ENCODE measurements at regions of chr13 and their contacts with region 1.

Region 1: GRCh38 chr13:75482070-75482819 is at the start of gene TBC1D4:
- DNase-seq: no peak
- H3K4me3 ChIP-seq: peak within 1 kb of the TSS; percentile 56 to 77
- H3K27ac ChIP-seq: peak within 1 kb of the TSS; percentile 72
- H3K4me1 ChIP-seq: peaks cover 23% of the 10 kb centered on the region
- H3K27me3 ChIP-seq: no peaks in the 10 kb centered on the region
- CTCF ChIP-seq: peak; percentile 16 to 77 (median 53)
- POLR2A ChIP-seq: no peak
- total RNA-seq, gene TBC1D4: 25.0 TPM

Region 2: DNA sequence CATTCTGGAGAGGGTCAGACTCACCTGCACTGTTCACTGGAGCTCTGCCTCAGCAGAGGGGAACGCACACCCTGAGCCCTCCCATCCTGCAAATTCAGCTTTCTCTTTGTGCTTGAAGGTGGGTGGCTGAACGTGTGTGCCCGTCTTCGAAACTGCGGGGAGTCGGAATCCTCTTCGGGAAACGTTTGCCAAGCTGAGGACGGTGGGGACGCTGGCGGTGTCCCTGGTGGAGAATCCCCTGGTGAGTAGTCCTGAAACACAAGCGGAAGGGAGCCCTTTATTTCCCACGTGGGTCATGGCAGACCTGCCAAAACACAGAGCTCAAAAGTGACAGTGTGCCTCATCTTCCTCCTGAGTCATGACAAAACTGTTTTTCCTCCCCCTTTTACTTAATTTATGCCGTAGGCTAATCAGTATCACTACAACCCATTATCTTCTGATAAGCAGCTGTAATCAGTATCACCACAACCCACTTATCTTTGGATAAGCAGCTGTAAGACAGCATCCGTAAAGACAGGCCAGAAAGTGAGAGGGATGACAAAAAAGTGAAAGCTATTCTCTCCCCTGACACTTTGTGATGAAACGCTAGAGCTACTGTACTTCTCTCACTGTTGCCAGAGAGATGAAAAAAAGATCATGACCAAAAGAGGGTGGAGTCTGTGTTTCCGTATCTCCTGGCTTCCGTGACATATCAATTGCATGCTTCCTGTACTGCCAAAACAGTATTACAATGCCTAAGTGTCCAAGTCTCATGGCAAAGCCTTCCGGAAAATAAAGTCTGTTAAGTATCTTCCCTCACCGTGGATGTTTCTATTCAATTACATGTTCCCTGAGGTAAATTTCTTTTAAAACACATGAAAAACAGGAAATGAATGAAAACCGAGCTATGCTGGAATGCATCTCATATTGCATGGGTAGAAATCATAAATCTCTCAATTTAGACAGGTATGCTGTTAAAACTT is 155.8 kb before region 1 on chr13:
- intact Hi-C with region 1: no loop called
- DNase-seq: no peak
- H3K4me3 ChIP-seq: peak overlapping the region; percentile 6 to 18
- H3K27ac ChIP-seq: peak overlapping the region; percentile 57
- H3K4me1 ChIP-seq: no peaks in the 10 kb centered on the region
- H3K27me3 ChIP-seq: no peaks in the 10 kb centered on the region
- CTCF ChIP-seq: no peak
- POLR2A ChIP-seq: no peak

Region 3: GRCh38 chr13:75537401-75538365 is 55.4 kb after region 1 on chr13 and contains the start of gene COMMD6:
- intact Hi-C with region 1: loop called (anchors 5 kb)
- DNase-seq: no peak
- H3K4me3 ChIP-seq: peak within 1 kb of the TSS; percentile 84 to 86
- H3K27ac ChIP-seq: peak within 1 kb of the TSS; percentile 66
- H3K4me1 ChIP-seq: peaks cover 17% of the 10 kb centered on the region
- H3K27me3 ChIP-seq: no peaks in the 10 kb centered on the region
- CTCF ChIP-seq: peak; percentile 24 to 62 (median 24)
- POLR2A ChIP-seq: peak in 1 of 2 donors; percentile 8
- total RNA-seq, gene COMMD6: 211 TPM

Measured in vagina (tissue), 2 donors.